Activated B cell treated with CpG ODN at 0.5 μM for 24 hours (primary cell): ENCODE measurements at regions of chr22 and their contacts with region 1.

Region 1: GRCh38 chr22:20957316-20958101 is 9.5 kb upstream of the AIFM3 start:
- DNase-seq: no peak
- ATAC-seq: peak; percentile 59
- H3K4me3 Mint-ChIP-seq: peak overlapping the region; percentile 83
- H3K27ac Mint-ChIP-seq: no peak overlapping the region
- H3K4me1 Mint-ChIP-seq: peaks cover 18% of the 10 kb centered on the region
- H3K27me3 Mint-ChIP-seq: peaks cover 6% of the 10 kb centered on the region
- CTCF ChIP-seq: no peak

Region 2: GRCh38 chr22:20885557-20886323 is 71.8 kb before region 1 on chr22:
- CTCF ChIA-PET with region 1: interaction called, 3 read pairs
- POLR2A ChIA-PET with region 1: no interaction called
- intact Hi-C with region 1: loop called (anchors 10 kb)
- DNase-seq: peak; percentile 33
- ATAC-seq: peak; percentile 61
- H3K4me3 Mint-ChIP-seq: no peak overlapping the region
- H3K27ac Mint-ChIP-seq: no peak overlapping the region
- H3K4me1 Mint-ChIP-seq: no peaks in the 10 kb centered on the region
- H3K27me3 Mint-ChIP-seq: no peaks in the 10 kb centered on the region
- CTCF ChIP-seq: no peak

Region 3: GRCh38 chr22:20904008-20904979 is 53.2 kb before region 1 on chr22:
- CTCF ChIA-PET with region 1: no interaction called
- POLR2A ChIA-PET with region 1: no interaction called
- intact Hi-C with region 1: no loop called
- DNase-seq: no peak
- ATAC-seq: no peak
- H3K4me3 Mint-ChIP-seq: no peak overlapping the region
- H3K27ac Mint-ChIP-seq: no peak overlapping the region
- H3K4me1 Mint-ChIP-seq: no peaks in the 10 kb centered on the region
- H3K27me3 Mint-ChIP-seq: peaks cover 3% of the 10 kb centered on the region
- CTCF ChIP-seq: no peak

Region 4: GRCh38 chr22:21055587-21056319 is 98.2 kb after region 1 on chr22:
- CTCF ChIA-PET with region 1: no interaction called
- POLR2A ChIA-PET with region 1: no interaction called
- intact Hi-C with region 1: no loop called
- DNase-seq: no peak
- ATAC-seq: no peak
- H3K4me3 Mint-ChIP-seq: no peak overlapping the region
- H3K27ac Mint-ChIP-seq: no peak overlapping the region
- H3K4me1 Mint-ChIP-seq: peaks cover 8% of the 10 kb centered on the region
- H3K27me3 Mint-ChIP-seq: peaks cover 24% of the 10 kb centered on the region
- CTCF ChIP-seq: no peak